Calu3 (cell line): ENCODE measurements at regions of chr14 and their contacts with region 1.

Region 1: DNA sequence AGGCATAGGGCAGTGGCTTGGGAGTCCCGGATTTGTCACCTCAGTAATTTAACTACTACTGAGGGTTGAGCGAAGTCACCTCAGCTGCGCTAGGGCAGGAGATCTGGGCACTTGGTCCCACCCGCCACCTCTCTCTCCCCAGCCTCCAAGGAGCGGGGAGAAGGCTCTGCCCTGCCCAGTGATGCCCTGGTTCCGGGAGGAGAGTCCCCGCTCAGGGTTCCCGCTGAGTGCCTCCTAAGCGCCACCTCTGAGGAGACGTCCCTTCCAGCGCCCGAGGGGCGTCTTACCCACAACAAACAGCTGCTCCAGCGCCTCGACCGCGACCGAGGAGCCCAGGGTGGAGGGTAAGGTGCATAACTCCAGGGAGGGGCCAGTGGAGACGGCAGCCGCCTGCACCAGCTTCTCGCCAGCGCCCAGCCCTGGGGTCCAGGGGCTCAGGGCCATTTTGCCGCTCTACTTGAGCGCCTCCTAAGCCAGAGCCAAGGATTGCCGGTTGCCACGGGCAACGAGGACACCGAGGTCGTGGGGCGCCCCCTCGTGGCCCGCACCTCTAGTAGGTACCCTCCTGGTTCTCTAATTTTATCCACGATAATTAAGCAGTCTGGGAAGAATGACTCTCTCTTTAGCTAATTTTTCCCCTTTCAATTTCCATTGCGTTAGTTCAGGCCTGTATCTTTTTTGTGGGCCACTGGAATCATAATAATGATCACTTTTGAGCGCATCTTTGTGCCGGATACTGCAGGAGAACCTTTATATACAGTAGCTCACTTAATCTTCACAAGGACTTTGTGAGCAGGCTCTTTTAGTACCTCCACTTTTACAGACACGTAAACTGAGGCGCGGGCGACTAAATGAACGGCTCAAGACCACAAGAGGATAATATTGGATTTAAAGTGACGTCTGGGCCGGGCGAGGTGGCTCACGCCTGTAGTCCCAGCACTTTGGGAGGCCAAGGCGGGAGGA is at the start of gene CCDC175:
- DNase-seq: peak; percentile 92
- H3K4me3 Mint-ChIP-seq: peak within 1 kb of the TSS; percentile 80
- H3K27ac Mint-ChIP-seq: peak within 1 kb of the TSS; percentile 36
- H3K4me1 Mint-ChIP-seq: no peaks in the 10 kb centered on the region
- H3K27me3 Mint-ChIP-seq: no peaks in the 10 kb centered on the region
- CTCF ChIP-seq: peak; percentile 78
- total RNA-seq, gene CCDC175: not detected in 2 replicates

Region 2: DNA sequence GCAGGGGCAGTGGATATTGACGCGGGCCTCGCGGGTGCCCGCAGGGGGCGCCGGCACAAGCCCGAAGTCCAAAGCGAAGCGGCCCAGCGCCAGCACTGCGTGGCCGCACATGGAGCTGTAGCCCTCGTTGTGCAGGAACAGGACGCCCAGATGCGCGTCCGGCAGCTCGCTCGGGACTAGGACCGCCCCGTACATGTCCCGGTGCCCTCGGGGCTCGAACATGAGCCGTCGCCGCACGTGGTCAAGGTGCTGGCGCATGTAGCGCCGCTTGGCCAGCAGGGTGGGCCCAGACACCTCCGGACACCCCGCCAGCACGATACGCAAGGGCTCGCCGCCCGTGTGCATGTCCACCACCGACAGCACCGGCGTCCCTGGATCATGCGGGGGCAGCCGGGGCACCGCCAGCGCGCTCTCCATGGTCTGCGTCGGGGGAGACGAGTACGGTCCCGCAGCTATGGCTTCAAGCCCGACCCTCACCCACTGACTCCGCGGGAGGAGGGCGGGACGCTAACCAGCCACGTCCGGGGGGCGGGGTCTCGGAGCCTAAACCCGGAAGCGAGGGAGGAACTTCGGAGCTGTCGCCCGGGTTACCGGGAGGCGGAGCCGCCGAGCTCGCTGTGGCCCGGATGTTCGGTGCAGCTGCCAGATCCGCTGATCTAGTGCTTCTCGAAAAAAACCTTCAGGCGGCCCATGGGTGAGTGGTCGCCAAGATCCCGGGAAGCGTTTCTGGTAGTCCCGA is 92.5 kb before region 1 on chr14 and contains the starts of genes JKAMP and L3HYPDH:
- CTCF ChIA-PET with region 1: interaction called, 13 read pairs
- intact Hi-C with region 1: no loop called
- DNase-seq: peak; percentile 98
- H3K4me3 Mint-ChIP-seq: peak within 1 kb of the TSS; percentile 80
- H3K27ac Mint-ChIP-seq: peak within 1 kb of the TSS; percentile 80
- H3K4me1 Mint-ChIP-seq: peaks cover 36% of the 10 kb centered on the region
- H3K27me3 Mint-ChIP-seq: no peaks in the 10 kb centered on the region
- CTCF ChIP-seq: peak; percentile 57
- total RNA-seq, gene JKAMP: 48.9 and 49.4 TPM in 2 replicates
- total RNA-seq, gene L3HYPDH: 27.3 and 28.4 TPM in 2 replicates

Region 3: DNA sequence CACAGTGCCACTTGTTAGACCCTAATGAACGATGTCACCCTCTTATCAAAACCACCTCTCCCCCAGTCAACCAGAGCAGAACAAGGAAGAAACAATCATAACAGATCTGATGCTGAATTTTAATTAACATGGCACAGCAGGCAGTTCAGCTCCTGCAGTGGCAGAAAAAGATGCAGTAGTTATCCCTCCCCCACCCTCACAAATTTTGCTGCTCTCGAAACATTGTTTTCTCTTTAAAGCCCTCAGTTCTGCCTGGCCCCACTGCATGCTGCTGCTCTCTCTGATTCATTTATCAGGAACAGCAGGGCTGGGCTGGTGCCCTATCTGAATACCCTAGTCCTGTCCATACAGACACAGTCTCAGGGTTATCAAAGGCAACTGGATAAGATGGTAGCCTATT is 12.2 kb before region 1 on chr14:
- CTCF ChIA-PET with region 1: no interaction called
- intact Hi-C with region 1: no loop called
- DNase-seq: no peak
- H3K4me3 Mint-ChIP-seq: no peak overlapping the region
- H3K27ac Mint-ChIP-seq: no peak overlapping the region
- H3K4me1 Mint-ChIP-seq: no peaks in the 10 kb centered on the region
- H3K27me3 Mint-ChIP-seq: peaks cover 22% of the 10 kb centered on the region
- CTCF ChIP-seq: no peak